Activated T-helper 2 cell treated with anti-CD3 and anti-CD28 coated beads, Interferon-gamma antibody, Interleukin-2, Interleukin-4, amounts not matched to agents 10 μg/mL and 5 μg/mL and 100 μg/mL, durations not matched to agents 14 hours and 24 hours and 36 hours (primary cell): ENCODE measurements at regions of chr12 and their contacts with region 1.

Region 1: GRCh38 chr12:75994186-75994731 is 37.3 kb downstream of the PHLDA1 start:
- DNase-seq: no peak
- H3K4me3 Mint-ChIP-seq: no peak overlapping the region
- H3K27ac Mint-ChIP-seq: peak overlapping the region; percentile 79
- H3K4me1 Mint-ChIP-seq: peaks cover 56% of the 10 kb centered on the region
- H3K27me3 Mint-ChIP-seq: no peaks in the 10 kb centered on the region

Region 2: GRCh38 chr12:75939016-75939642 is 55.1 kb before region 1 on chr12:
- intact Hi-C with region 1: loop called (anchors 1 kb)
- DNase-seq: peak; percentile 20
- H3K4me3 Mint-ChIP-seq: no peak overlapping the region
- H3K27ac Mint-ChIP-seq: no peak overlapping the region
- H3K4me1 Mint-ChIP-seq: peaks cover 14% of the 10 kb centered on the region
- H3K27me3 Mint-ChIP-seq: no peaks in the 10 kb centered on the region

Region 3: DNA sequence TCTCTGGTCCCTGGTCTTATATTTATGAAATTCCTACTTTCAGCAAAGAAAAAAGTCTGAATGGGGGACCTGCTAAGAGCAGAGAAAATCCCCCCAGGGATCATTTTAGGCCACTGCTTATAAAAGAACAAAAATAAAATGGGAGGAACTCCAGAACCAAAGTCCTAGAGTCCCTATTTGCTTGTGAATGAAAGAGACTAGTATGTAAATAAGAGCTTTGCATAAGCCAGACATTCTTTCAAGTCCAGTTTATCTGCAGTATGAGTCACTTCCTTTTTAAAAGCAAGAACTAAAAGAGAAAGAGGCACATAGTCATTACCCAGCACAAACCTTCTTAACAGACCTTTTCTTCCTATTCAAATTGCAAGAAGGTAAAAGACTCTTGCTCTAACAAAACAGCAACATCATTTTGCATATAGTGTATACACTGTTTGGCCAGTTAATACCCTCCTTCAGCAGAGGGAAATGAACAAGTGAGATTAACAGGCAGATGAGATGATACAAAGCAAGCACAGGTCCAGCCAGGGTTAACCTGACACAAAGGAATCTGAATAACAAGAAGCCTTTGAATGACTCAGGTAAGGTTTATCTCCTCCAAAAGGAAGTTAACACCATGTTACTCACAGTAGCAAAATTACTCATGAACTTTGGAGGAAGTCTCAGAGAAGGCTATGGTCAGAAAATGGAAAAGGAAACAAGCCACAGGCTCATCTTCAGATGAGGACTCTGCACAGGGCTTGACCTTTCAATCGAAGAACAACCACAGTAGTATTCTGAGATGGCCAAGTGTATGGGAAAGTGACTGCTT is 50.0 kb before region 1 on chr12:
- intact Hi-C with region 1: loop called (anchors 1 kb)
- DNase-seq: no peak
- H3K4me3 Mint-ChIP-seq: peak overlapping the region; percentile 52
- H3K27ac Mint-ChIP-seq: peak overlapping the region; percentile 97
- H3K4me1 Mint-ChIP-seq: peaks cover 32% of the 10 kb centered on the region
- H3K27me3 Mint-ChIP-seq: no peaks in the 10 kb centered on the region

Region 4: GRCh38 chr12:76450690-76451089 is 456.4 kb after region 1 on chr12:
- intact Hi-C with region 1: no loop called
- DNase-seq: no peak
- H3K4me3 Mint-ChIP-seq: no peak overlapping the region
- H3K27ac Mint-ChIP-seq: peak overlapping the region; percentile 4
- H3K4me1 Mint-ChIP-seq: peaks cover 18% of the 10 kb centered on the region
- H3K27me3 Mint-ChIP-seq: no peaks in the 10 kb centered on the region